ENCODE measurements at regions of chr5 and their contacts with region 1.

Region 1: GRCh38 chr5:159951387-159951786 is 35.1 kb downstream of the ADRA1B start:
- DNase-seq: no peak
- H3K4me3 ChIP-seq: no peak overlapping the region
- CTCF ChIP-seq: peak; percentile 30

Region 2: DNA sequence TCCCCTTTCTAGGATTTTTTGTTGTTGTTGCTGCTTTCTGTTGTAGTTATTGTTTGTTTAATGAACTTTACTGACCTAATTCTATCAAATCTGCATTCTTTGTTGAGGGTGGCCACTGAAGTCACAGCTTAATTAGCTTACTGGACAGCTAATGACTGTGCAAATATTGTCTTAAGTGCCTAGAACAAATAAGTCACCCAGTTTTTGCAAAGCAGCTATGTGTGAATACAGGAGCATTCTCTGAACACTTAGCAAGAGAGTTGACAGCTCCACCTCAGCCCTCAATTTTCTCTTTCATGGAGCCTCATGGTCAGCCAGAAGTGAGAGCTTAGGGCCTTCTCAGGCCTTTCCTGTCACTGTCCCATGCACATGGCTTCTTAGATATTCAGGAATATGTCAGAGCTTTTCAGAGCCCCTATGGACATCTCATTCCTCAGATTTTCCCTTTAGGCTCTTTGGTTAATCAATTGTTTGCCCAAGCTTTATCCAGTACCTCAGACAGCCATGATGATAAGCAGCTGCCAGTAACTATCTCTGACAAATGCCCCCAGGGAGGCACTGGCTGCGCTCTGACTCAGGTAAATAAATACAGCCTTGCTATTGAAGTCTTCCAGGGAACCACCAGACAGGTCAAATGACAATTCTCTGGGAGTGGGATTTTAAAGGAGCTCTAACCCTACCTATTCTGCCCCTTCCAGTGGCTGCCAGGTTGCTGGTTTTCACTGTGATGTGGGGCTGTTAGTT is 379.7 kb before region 1 on chr5:
- CTCF ChIA-PET with region 1: no interaction called
- POLR2A ChIA-PET with region 1: no interaction called
- DNase-seq: no peak
- H3K4me3 ChIP-seq: no peak overlapping the region
- CTCF ChIP-seq: no peak

Region 3: DNA sequence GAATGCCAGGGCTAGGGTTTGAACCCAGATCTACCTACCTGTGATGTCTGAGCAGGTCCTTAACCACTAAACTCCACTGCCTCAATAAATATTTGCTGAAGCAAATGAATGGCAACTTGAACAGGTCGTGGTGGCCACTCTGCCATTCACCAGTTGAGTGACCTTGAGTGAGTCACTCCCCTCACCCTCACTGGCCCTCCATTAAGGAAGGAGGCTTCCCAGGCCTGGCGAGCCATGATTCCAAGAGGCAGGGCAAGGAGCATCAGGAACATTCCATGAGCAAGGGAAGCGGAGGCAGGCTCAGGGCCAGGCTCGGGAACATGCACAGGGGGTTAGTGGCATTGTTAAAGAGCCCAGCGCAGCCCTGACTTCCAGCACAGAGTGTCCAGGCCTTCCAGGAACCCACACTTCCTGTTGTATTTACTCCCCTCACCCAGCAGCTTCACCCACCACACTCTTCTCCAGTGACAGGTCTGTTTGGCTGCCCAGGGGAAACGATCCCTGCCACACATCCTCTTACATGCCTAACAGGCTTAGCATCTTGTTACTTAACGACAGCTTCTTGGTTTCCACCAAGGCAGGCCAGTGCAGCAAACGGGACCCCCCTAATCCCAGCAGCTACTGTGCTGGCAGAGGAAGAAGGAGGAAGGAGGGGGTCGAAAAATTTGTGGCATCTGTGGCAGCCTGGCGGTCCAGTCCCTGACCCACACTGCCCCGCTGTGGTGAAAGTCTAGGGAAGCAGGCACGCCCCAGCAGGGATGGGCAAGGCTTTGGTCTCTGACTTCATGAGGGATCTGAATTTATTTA is 13.8 kb after region 1 on chr5:
- CTCF ChIA-PET with region 1: interaction called, 39 read pairs
- POLR2A ChIA-PET with region 1: no interaction called
- DNase-seq: no peak
- H3K4me3 ChIP-seq: no peak overlapping the region
- CTCF ChIP-seq: peak; percentile 75

Measured in AG04449 (cell line).